ENCODE measurements at regions of chr3 and their contacts with region 1.

Region 1: DNA sequence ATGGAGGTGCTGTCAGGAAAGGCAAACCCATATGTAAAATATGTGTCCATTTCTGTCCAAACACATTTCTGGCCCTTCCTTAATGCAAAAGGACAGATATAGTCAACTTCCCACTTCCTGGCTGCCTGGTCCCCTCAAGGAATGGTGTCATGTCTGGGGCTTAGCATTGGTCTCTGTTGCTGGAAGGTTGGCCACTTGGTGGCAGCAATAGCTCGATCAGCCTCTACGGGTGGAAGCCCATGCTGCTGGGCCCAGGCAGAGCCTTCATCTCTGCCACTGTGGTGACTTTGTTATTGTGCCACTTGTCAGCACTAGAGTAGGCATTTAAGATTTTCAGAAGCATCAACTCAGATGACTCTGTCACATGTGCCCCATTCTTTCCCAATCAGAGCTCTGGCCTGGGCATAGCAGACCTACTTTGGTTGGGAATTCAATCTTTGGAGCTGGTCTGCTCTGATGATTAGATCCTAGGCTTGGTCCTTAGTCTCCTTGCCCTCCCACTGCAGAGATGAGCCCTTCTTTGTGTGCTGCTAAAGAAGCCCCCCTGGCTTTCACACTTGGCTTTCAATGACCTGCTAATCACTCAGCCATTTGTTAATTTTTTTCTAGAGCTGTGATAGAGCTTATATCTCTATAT is 51.0 kb upstream of the SPSB4 start:
- DNase-seq: peak; percentile 7
- ATAC-seq: peak; percentile 100
- H3K4me3 ChIP-seq: no peak overlapping the region
- H3K27ac ChIP-seq: no peak overlapping the region
- H3K4me1 ChIP-seq: no peaks in the 10 kb centered on the region
- H3K27me3 ChIP-seq: no peaks in the 10 kb centered on the region; a peak in 1 of 4 replicates
- CTCF ChIP-seq: peak; percentile 74 to 88 (median 76)
- EP300 ChIP-seq: no peak
- POLR2A ChIP-seq: no peak
- RAD21 ChIP-seq: peak; percentile 71

Region 2: DNA sequence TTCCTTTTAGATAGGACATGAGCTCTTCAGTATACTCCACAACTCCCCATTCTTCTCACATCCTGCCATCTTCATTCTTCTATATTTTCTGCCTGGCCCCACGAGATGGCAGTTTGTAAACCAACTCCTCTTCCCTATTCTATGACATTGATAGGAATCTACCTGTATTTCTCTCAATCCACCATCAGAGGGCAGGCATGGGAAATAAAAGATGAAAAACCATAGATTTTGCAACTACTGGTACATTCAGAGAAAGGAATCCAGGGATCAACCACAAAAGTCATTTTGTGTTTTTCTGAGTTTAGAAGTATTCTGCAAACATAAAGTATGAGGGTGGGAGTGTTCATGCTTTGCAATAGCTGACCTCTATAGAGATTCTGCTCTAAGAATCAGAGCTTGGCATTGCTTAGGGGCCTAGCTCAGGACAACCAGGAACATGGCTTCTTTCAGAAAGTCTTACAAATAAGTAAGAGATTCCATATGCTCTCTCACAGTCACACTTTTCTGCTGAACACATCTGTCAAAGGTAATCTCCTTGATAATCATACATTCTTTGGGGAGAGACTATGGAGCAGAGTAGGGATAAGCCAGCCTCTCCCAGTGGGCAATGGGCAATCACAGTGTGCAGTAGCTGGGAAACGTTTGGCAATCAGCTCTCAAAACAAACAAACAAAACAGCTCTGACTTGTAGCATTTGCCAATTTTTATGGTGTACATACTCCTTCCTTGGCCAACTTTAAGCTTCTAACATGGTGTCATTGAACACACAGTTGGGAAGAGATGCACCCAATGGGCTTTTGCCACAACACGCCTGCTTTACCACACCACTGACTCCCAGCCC is 101.6 kb before region 1 on chr3:
- CTCF ChIA-PET with region 1: interaction called, 10 read pairs
- POLR2A ChIA-PET with region 1: no interaction called
- RAD21 ChIA-PET with region 1: no interaction called
- SMC1A ChIA-PET with region 1: no interaction called
- in situ Hi-C with region 1: no loop called
- intact Hi-C with region 1: no loop called
- DNase-seq: peak; percentile 7
- ATAC-seq: peak; percentile 86
- H3K4me3 ChIP-seq: no peak overlapping the region
- H3K27ac ChIP-seq: no peak overlapping the region
- H3K4me1 ChIP-seq: no peaks in the 10 kb centered on the region
- H3K27me3 ChIP-seq: no peaks in the 10 kb centered on the region
- CTCF ChIP-seq: peak; percentile 54 to 60 (median 56)
- EP300 ChIP-seq: no peak
- POLR2A ChIP-seq: no peak
- RAD21 ChIP-seq: peak; percentile 80

Region 3: GRCh38 chr3:141011232-141011996 is 11.3 kb after region 1 on chr3:
- CTCF ChIA-PET with region 1: interaction called, 26 read pairs
- POLR2A ChIA-PET with region 1: no interaction called
- RAD21 ChIA-PET with region 1: interaction called, 4 read pairs
- SMC1A ChIA-PET with region 1: interaction called, 7 read pairs
- in situ Hi-C with region 1: no loop called
- intact Hi-C with region 1: no loop called
- DNase-seq: no peak
- ATAC-seq: peak; percentile 97
- H3K4me3 ChIP-seq: no peak overlapping the region
- H3K27ac ChIP-seq: no peak overlapping the region
- H3K4me1 ChIP-seq: no peaks in the 10 kb centered on the region
- H3K27me3 ChIP-seq: no peaks in the 10 kb centered on the region
- CTCF ChIP-seq: peak; percentile 74 to 90 (median 76)
- EP300 ChIP-seq: no peak
- POLR2A ChIP-seq: no peak
- RAD21 ChIP-seq: peak; percentile 56

Region 4: GRCh38 chr3:141105828-141106628 is 105.9 kb after region 1 on chr3:
- CTCF ChIA-PET with region 1: interaction called, 13 read pairs
- POLR2A ChIA-PET with region 1: no interaction called
- RAD21 ChIA-PET with region 1: interaction called, 23 read pairs
- SMC1A ChIA-PET with region 1: interaction called, 13 read pairs
- in situ Hi-C with region 1: loop called (anchors 5 kb)
- intact Hi-C with region 1: loop called (anchors 1 kb)
- DNase-seq: peak; percentile 20
- ATAC-seq: peak; percentile 81
- H3K4me3 ChIP-seq: no peak overlapping the region
- H3K27ac ChIP-seq: no peak overlapping the region
- H3K4me1 ChIP-seq: no peaks in the 10 kb centered on the region
- H3K27me3 ChIP-seq: no peaks in the 10 kb centered on the region
- CTCF ChIP-seq: peak; percentile 72 to 81 (median 74)
- EP300 ChIP-seq: no peak
- POLR2A ChIP-seq: no peak
- RAD21 ChIP-seq: peak; percentile 73

Region 5: DNA sequence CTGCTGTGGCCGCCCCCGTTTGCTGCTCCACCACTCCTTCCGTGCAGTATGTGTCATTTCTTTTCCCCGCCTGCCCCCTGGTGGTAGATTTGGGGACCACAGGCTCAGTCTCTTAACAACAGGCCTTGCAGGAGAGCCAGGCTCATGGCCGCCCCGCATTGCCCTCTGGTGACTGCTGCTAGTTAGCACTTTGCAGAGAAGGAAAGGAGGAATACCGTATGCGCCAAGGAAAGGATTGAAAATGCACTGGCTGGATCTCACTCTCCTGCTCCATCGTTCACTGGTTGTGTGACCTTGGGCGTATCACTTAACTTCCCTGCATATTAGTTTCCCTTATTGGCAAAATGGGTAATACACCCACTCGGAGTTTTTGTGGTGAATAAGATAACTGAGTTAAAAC is 192.2 kb after region 1 on chr3:
- CTCF ChIA-PET with region 1: interaction called, 64 read pairs
- POLR2A ChIA-PET with region 1: no interaction called
- RAD21 ChIA-PET with region 1: interaction called, 12 read pairs
- SMC1A ChIA-PET with region 1: interaction called, 17 read pairs
- in situ Hi-C with region 1: loop called (anchors 5 kb)
- intact Hi-C with region 1: loop called (anchors 1 kb)
- DNase-seq: peak; percentile 64
- ATAC-seq: peak; percentile 100
- H3K4me3 ChIP-seq: no peak overlapping the region
- H3K27ac ChIP-seq: no peak overlapping the region
- H3K4me1 ChIP-seq: no peaks in the 10 kb centered on the region
- H3K27me3 ChIP-seq: no peaks in the 10 kb centered on the region; a peak in 1 of 4 replicates
- CTCF ChIP-seq: peak; percentile 93 to 99 (median 94)
- EP300 ChIP-seq: no peak
- POLR2A ChIP-seq: no peak
- RAD21 ChIP-seq: peak; percentile 90

Region 6: DNA sequence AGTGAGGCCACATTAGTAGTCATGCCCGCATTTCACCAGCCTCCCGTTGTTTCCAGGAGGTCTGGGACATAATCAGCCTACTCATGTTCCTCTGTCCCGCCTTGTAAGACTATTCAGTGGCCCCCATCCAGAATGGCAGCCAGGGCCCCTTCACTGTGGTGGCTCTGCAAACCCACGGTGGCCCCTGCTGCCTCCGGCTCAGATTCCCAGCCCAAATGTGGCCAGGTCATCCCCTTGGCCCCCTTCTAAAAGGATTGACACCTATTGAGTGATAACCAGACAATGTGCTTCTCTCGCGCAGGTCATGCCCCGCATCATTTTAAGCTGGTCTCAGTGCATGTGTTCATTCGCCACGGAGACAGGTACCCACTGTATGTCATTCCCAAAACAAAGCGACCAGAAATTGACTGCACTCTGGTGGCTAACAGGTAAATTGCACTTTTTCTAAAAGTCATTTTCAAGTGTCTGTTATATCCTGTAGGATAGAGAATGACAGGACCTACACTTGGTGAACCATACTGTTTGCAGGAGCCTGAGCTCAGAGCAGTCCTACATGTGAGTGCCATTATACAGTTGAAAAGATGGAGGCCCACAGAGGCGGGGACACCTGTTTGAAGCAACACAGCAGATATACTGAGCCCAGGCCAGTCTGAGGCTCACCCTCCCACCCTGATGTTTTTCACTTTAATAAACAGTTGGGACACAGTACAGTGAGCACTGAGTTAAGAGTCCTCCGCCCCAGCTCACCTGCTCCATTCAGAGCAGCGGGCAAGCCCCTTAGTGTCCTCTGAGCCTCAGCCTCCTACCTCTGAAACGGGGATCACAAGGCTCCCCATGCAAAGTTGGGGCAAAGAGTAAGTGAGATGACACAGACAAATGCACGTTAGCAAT is 279.2 kb after region 1 on chr3:
- CTCF ChIA-PET with region 1: no interaction called
- POLR2A ChIA-PET with region 1: no interaction called
- RAD21 ChIA-PET with region 1: no interaction called
- SMC1A ChIA-PET with region 1: no interaction called
- in situ Hi-C with region 1: no loop called
- intact Hi-C with region 1: loop called (anchors 10 kb)
- DNase-seq: no peak
- ATAC-seq: peak; percentile 87
- H3K4me3 ChIP-seq: no peak overlapping the region
- H3K27ac ChIP-seq: no peak overlapping the region
- H3K4me1 ChIP-seq: peaks cover 7% of the 10 kb centered on the region
- H3K27me3 ChIP-seq: no peaks in the 10 kb centered on the region
- CTCF ChIP-seq: peak; percentile 49 to 70 (median 56)
- EP300 ChIP-seq: no peak
- POLR2A ChIP-seq: no peak
- RAD21 ChIP-seq: peak; percentile 62